ENCODE measurements at regions of chr14 and their contacts with region 1.

Region 1: GRCh38 chr14:53539489-53540126 is 386.5 kb upstream of the DDHD1 start:
- DNase-seq: peak; percentile 82
- H3K4me3 Mint-ChIP-seq: no peak overlapping the region
- H3K27ac Mint-ChIP-seq: no peak overlapping the region
- H3K4me1 Mint-ChIP-seq: no peaks in the 10 kb centered on the region
- H3K27me3 Mint-ChIP-seq: no peaks in the 10 kb centered on the region
- CTCF ChIP-seq: peak; percentile 49

Region 2: GRCh38 chr14:53432378-53432802 is 107.2 kb before region 1 on chr14:
- CTCF ChIA-PET with region 1: no interaction called
- intact Hi-C with region 1: loop called (anchors 5 kb)
- DNase-seq: peak; percentile 49
- H3K4me3 Mint-ChIP-seq: no peak overlapping the region
- H3K27ac Mint-ChIP-seq: no peak overlapping the region
- H3K4me1 Mint-ChIP-seq: no peaks in the 10 kb centered on the region
- H3K27me3 Mint-ChIP-seq: peaks cover 16% of the 10 kb centered on the region
- CTCF ChIP-seq: peak; percentile 69

Region 3: GRCh38 chr14:53778263-53778662 is 238.7 kb after region 1 on chr14:
- CTCF ChIA-PET with region 1: no interaction called
- intact Hi-C with region 1: loop called (anchors 10 kb)
- DNase-seq: no peak
- H3K4me3 Mint-ChIP-seq: no peak overlapping the region
- H3K27ac Mint-ChIP-seq: no peak overlapping the region
- H3K4me1 Mint-ChIP-seq: no peaks in the 10 kb centered on the region
- H3K27me3 Mint-ChIP-seq: no peaks in the 10 kb centered on the region
- CTCF ChIP-seq: no peak

Region 4: GRCh38 chr14:53929871-53930715 is 390.5 kb after region 1 on chr14:
- CTCF ChIA-PET with region 1: no interaction called
- intact Hi-C with region 1: loop called (anchors 10 kb)
- DNase-seq: peak; percentile 76
- H3K4me3 Mint-ChIP-seq: no peak overlapping the region
- H3K27ac Mint-ChIP-seq: no peak overlapping the region
- H3K4me1 Mint-ChIP-seq: peaks cover 28% of the 10 kb centered on the region
- H3K27me3 Mint-ChIP-seq: no peaks in the 10 kb centered on the region
- CTCF ChIP-seq: peak; percentile 43

Region 5: GRCh38 chr14:54175298-54175942 is 635.8 kb after region 1 on chr14:
- CTCF ChIA-PET with region 1: no interaction called
- intact Hi-C with region 1: loop called (anchors 1 kb)
- DNase-seq: peak; percentile 80
- H3K4me3 Mint-ChIP-seq: no peak overlapping the region
- H3K27ac Mint-ChIP-seq: no peak overlapping the region
- H3K4me1 Mint-ChIP-seq: peaks cover 30% of the 10 kb centered on the region
- H3K27me3 Mint-ChIP-seq: no peaks in the 10 kb centered on the region
- CTCF ChIP-seq: peak; percentile 64

Region 6: GRCh38 chr14:54338696-54339317 is 799.2 kb after region 1 on chr14:
- CTCF ChIA-PET with region 1: interaction called, 3 read pairs
- intact Hi-C with region 1: loop called (anchors 2 kb)
- DNase-seq: peak; percentile 12
- H3K4me3 Mint-ChIP-seq: no peak overlapping the region
- H3K27ac Mint-ChIP-seq: no peak overlapping the region
- H3K4me1 Mint-ChIP-seq: peaks cover 10% of the 10 kb centered on the region
- H3K27me3 Mint-ChIP-seq: no peaks in the 10 kb centered on the region
- CTCF ChIP-seq: peak; percentile 31

Measured in Calu3 (cell line).